Left ventricle myocardium inferior (tissue), 1 donor: ENCODE measurements at regions of chr11 and their contacts with region 1.

Region 1: GRCh38 chr11:107573438-107573837 is 7.9 kb upstream of the ALKBH8 start:
- DNase-seq: no peak
- H3K4me3 ChIP-seq: no peak overlapping the region
- H3K27ac ChIP-seq: no peak overlapping the region
- H3K4me1 ChIP-seq: no peaks in the 10 kb centered on the region
- H3K27me3 ChIP-seq: peaks cover 30% of the 10 kb centered on the region
- CTCF ChIP-seq: no peak

Region 2: DNA sequence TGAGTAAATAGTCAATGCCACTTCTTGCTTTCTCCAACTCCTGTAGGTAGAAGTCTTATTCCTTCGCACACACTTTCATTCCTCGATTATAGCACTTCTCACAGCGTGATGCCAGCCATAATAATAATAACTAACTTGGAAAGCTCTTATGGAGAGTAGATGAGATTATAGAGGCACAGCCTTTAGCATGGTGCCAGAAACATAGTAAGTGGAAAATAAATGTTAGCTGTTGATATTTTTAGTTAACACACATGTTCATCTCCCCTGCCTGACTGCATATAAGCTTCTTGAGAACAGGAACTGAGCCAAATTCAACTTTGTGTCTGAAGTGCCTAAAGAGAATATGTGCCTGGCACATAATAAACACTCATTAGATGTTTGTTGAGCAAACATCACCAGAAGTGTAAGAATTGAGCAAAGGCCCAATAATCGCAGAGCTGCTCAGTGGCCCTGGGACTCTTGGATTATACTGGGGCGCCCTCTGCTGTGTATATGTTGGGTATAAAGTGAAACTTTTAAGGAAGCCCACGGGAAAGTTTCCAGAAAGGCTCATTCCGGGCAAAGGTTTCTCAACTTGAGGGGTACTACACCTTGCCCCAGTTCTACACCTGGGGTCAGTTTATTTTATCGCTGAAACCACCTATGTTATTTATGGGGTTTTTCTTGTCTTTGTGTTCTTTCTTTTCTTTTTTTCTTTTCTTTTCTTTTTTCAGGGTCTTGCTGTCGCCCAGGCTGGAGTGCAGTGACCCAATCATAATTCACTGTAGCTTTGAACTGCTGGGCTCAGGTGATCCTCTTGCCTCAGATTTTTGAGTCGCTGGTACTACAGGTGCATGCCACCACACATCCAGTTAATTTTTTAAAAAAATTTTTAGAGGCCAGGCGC is 116.1 kb after region 1 on chr11:
- intact Hi-C with region 1: loop called (anchors 5 kb)
- DNase-seq: peak; percentile 42
- H3K4me3 ChIP-seq: no peak overlapping the region
- H3K27ac ChIP-seq: no peak overlapping the region
- H3K4me1 ChIP-seq: peaks cover 7% of the 10 kb centered on the region
- H3K27me3 ChIP-seq: peaks cover 39% of the 10 kb centered on the region
- CTCF ChIP-seq: peak; percentile 71

Region 3: DNA sequence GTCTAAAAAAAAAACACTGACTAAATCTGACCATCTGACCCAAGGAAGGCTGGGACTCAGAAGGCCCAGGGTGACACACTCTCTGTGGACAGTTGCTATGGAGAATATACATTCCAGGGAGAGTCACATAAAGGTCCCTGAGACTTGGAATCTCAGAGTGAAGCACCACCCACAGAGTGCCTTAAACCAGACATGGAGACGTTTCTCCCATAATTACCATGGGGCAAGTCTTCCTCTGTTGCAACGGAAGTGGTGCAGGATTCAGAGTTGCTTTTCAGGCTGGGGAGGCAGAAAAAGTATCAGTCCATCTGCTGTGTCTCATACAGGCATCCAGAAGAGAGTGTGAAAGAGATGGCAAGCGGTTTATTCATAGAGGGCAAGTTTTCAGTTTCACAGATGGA is 197.1 kb after region 1 on chr11:
- intact Hi-C with region 1: loop called (anchors 10 kb)
- DNase-seq: no peak
- H3K4me3 ChIP-seq: no peak overlapping the region
- H3K27ac ChIP-seq: no peak overlapping the region
- H3K4me1 ChIP-seq: no peaks in the 10 kb centered on the region
- H3K27me3 ChIP-seq: peaks cover 5% of the 10 kb centered on the region
- CTCF ChIP-seq: no peak